IMR-90 (cell line): ENCODE measurements at regions of chr6 and their contacts with region 1.

Region 1: GRCh38 chr6:157059781-157060180 is 263.5 kb downstream of the TMEM242 start:
- DNase-seq: no peak
- ATAC-seq: no peak
- H3K4me3 ChIP-seq: no peak overlapping the region
- H3K27ac ChIP-seq: no peak overlapping the region
- H3K4me1 ChIP-seq: peaks cover 9% of the 10 kb centered on the region
- H3K27me3 ChIP-seq: no peaks in the 10 kb centered on the region
- CTCF ChIP-seq: no peak
- POLR2A ChIP-seq: no peak
- RAD21 ChIP-seq: no peak

Region 2: GRCh38 chr6:157075549-157076450 is 16.0 kb after region 1 on chr6:
- CTCF ChIA-PET with region 1: interaction called, 5 read pairs
- POLR2A ChIA-PET with region 1: no interaction called
- dilution Hi-C with region 1: no loop called
- in situ Hi-C with region 1: no loop called
- intact Hi-C with region 1: loop called (anchors 2 kb)
- DNase-seq: peak; percentile 68
- ATAC-seq: no peak
- H3K4me3 ChIP-seq: no peak overlapping the region
- H3K27ac ChIP-seq: no peak overlapping the region
- H3K4me1 ChIP-seq: peaks cover 5% of the 10 kb centered on the region
- H3K27me3 ChIP-seq: no peaks in the 10 kb centered on the region
- CTCF ChIP-seq: no peak
- POLR2A ChIP-seq: no peak
- RAD21 ChIP-seq: no peak